AG04449 (cell line): ENCODE measurements at regions of chr11 and their contacts with region 1.

Region 1: GRCh38 chr11:12963792-12964536 is 45.2 kb upstream of the RASSF10 start:
- DNase-seq: no peak
- H3K4me3 ChIP-seq: no peak overlapping the region
- CTCF ChIP-seq: peak; percentile 84

Region 2: GRCh38 chr11:12952094-12952493 is 11.9 kb before region 1 on chr11:
- CTCF ChIA-PET with region 1: interaction called, 10 read pairs
- POLR2A ChIA-PET with region 1: no interaction called
- DNase-seq: no peak
- H3K4me3 ChIP-seq: no peak overlapping the region
- CTCF ChIP-seq: no peak

Region 3: GRCh38 chr11:13152736-13153533 is 189.0 kb after region 1 on chr11:
- CTCF ChIA-PET with region 1: interaction called, 357 read pairs
- POLR2A ChIA-PET with region 1: no interaction called
- DNase-seq: no peak
- H3K4me3 ChIP-seq: no peak overlapping the region
- CTCF ChIP-seq: peak; percentile 42

Region 4: DNA sequence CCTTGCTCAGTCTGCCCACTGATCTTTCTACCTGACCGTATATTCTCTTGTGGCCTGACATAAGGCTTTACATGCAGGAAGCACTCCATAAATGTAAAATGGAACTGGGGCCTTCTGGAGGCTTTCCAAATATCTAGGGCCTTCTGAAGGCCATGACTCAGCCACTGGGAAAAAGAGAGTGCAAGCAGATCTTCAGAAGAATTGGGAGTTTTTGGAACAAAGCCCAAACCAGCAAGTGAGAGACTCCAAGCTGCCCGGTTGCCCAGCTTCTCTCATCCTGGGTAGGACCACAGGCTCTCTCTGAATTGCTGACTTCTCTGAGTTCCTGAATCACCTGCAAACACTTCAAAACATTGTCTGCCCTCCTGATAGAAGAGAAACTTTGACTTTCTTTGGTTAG is 205.7 kb after region 1 on chr11:
- CTCF ChIA-PET with region 1: interaction called, 75 read pairs
- POLR2A ChIA-PET with region 1: no interaction called
- DNase-seq: peak; percentile 85
- H3K4me3 ChIP-seq: no peak overlapping the region
- CTCF ChIP-seq: no peak

Region 5: DNA sequence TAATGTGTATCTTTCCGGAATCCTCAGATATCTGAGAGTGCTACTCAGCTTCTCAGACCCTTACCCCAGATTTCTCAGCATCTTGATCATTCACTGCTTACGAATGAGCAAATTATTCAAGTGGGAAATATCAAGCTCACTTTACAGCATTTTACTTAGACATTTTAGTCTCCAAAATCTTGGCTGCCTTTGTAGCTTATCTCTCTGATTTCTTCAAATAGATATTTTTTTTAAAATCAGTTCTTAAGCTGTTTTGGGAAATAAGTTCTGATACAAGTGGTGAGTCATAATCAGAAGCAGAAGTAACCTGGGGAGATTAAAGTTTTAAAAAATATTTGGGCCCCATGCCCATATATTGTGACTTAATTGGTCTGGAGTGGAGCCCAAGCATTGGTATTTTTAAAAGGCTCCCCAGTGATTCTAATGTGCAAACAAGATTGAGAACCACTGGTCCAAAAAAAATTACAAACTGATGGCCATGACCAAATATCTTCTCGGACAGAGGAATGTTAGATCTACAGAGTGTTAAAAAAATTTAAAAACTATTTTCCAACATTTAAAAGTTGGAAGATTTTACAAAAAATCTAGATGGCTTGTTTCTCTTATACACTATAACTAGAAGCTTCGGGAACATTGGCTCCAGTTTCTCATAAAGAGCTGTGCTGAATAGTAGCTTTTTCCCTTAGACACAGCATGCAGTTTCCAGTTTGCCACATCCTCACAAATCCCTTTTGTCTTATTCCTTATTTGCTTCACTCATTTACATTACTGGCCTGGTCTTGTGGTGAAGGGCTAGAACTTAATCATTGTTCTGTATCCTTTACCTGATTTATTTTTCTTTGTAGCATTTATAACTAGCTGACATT is 225.8 kb after region 1 on chr11:
- CTCF ChIA-PET with region 1: interaction called, 118 read pairs
- POLR2A ChIA-PET with region 1: no interaction called
- DNase-seq: no peak
- H3K4me3 ChIP-seq: no peak overlapping the region
- CTCF ChIP-seq: no peak

Region 6: DNA sequence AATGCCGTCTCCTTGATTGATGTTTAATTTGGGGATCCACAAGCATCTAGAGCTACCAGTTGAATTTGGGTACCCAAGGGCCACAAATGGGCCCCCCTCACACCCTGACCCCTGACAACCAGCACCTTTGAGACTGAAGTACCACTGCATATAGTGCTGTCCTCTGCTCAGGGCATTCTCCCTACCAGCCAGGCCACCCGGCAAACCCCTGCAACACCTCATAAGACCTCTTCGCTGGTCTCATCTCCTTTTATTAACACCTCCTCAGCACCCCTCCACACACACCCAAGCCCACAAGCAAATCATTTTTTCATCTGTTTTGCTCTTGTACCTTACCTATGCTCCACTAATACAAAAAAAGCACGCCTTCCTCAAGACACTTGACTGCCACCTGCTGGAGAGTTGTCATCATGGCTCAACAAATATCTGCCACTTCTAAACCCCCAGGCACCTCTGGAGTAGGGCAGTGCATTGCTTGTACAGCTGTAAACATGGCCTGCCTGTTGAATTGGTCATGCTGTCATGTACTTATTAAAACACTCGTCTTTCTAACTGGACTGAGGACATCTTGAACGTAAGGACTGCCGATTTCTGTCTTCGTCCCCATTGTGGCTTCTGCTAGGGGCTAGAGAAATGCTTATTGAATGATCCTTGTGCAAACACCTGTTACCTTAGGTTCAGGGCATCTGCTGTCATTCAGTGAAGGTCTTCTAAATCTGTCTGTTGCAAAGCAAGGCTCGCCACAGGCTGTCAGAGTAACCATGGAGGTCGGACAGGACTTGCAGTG is 380.2 kb after region 1 on chr11:
- CTCF ChIA-PET with region 1: interaction called, 12 read pairs
- POLR2A ChIA-PET with region 1: no interaction called
- DNase-seq: no peak
- H3K4me3 ChIP-seq: no peak overlapping the region
- CTCF ChIP-seq: peak; percentile 70